PC-3 (cell line): ENCODE measurements at regions of chr10 and their contacts with region 1.

Region 1: DNA sequence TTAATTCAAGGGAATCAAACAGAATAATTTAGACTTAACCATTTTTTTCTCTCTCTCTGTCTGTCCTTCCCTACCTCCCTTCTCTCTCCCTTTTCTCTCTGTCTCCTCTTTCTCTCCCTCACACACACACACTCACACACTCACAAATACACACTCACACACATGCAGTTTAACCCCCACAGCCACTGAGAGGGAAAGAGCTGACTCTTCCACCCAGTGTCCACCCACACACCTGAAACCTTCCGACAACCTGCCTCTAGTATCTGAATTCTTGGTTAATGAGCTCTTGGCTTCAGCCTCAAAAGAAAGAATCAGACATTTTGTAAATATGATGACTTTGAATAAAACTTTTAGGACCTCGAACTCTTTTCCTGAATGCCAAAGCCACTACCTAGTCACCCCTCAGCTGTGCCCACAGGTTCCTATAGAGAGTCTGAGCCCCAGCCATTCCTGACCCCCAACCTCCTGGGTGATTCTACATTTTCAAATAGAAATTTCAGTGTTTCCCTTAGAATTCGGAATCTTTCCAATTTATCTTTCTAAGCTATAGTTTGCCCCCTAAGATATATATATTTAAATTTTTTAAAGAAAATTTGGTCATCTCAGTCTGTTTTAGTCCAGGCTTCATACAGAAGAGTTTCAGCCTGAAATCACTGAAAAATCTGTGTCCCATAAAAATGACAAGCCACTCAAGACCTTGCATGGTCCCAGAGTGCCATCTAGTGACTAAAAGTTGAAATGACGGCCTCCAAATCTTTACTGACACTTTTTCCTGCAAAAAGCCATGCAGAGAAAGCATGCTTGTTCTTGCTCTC is 202.8 kb downstream of the IPMK start:
- DNase-seq: peak; percentile 92
- ATAC-seq: peak; percentile 61
- H3K4me3 ChIP-seq: no peak overlapping the region
- H3K27ac ChIP-seq: no peak overlapping the region
- H3K4me1 ChIP-seq: peaks cover 12% of the 10 kb centered on the region; the same call in 1 of the 2 replicates
- H3K27me3 ChIP-seq: no peaks in the 10 kb centered on the region
- CTCF ChIP-seq: peak; percentile 96

Region 2: GRCh38 chr10:57579926-57580325 is 485.0 kb before region 1 on chr10:
- CTCF ChIA-PET with region 1: no interaction called
- POLR2A ChIA-PET with region 1: no interaction called
- intact Hi-C with region 1: loop called (anchors 1 kb)
- DNase-seq: peak; percentile 78
- ATAC-seq: peak; percentile 98
- H3K4me3 ChIP-seq: no peak overlapping the region
- H3K27ac ChIP-seq: no peak overlapping the region
- H3K4me1 ChIP-seq: no peaks in the 10 kb centered on the region
- H3K27me3 ChIP-seq: no peaks in the 10 kb centered on the region
- CTCF ChIP-seq: peak; percentile 90

Region 3: DNA sequence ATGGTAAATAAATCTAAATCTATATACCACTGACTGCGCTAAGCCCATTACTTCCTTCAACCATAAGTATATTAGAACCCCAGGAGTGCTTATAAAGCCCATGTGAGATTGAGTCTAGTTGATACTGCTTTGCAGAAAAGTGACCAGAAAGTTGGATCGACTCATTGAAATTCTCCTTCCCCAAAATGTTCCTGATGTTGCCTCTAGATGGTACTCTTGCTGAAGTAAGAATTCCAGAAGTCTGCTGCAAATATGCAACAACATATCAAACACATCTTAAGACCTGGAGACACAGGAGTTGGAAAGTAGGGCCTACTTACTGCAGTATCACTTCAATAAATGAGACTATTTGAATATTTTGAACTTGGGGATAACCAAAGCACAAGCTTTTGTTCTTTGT is 348.0 kb before region 1 on chr10:
- CTCF ChIA-PET with region 1: interaction called, 3 read pairs
- POLR2A ChIA-PET with region 1: no interaction called
- intact Hi-C with region 1: loop called (anchors 1 kb)
- DNase-seq: peak; percentile 78
- ATAC-seq: peak; percentile 84
- H3K4me3 ChIP-seq: no peak overlapping the region
- H3K27ac ChIP-seq: no peak overlapping the region
- H3K4me1 ChIP-seq: no peaks in the 10 kb centered on the region
- H3K27me3 ChIP-seq: no peaks in the 10 kb centered on the region
- CTCF ChIP-seq: peak; percentile 86

Region 4: DNA sequence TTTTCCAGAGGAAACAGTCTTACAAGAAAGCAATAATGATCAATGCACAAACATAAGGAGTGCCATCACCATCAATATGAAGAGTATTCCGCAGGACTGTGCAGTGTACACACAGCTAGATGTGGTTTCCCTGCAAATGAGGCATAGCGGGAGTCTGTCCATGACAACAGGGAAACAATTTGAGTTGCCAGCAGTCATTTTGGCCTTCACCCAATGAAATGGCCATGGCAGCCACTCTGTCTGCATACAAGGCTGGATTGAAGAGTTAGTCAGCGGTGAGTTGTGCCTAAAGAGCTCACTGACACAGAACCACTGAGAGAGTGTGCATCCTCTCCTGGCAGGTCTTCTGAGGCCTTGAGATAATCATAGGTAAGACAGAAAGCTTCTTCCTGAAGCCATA is 100.6 kb before region 1 on chr10:
- CTCF ChIA-PET with region 1: no interaction called
- POLR2A ChIA-PET with region 1: no interaction called
- intact Hi-C with region 1: loop called (anchors 5 kb)
- DNase-seq: peak; percentile 94
- ATAC-seq: peak; percentile 96
- H3K4me3 ChIP-seq: no peak overlapping the region
- H3K27ac ChIP-seq: 0 out of 2 replicates have a peak overlapping the region, but pooled peaks have one; percentile 1
- H3K4me1 ChIP-seq: peaks cover 19% of the 10 kb centered on the region
- H3K27me3 ChIP-seq: no peaks in the 10 kb centered on the region
- CTCF ChIP-seq: no peak

Region 5: GRCh38 chr10:57993302-57993701 is 71.6 kb before region 1 on chr10:
- CTCF ChIA-PET with region 1: no interaction called
- POLR2A ChIA-PET with region 1: no interaction called
- intact Hi-C with region 1: no loop called
- DNase-seq: no peak
- ATAC-seq: peak; percentile 10; the same call in 1 of the 2 replicates
- H3K4me3 ChIP-seq: no peak overlapping the region
- H3K27ac ChIP-seq: no peak overlapping the region
- H3K4me1 ChIP-seq: peaks cover 13% of the 10 kb centered on the region
- H3K27me3 ChIP-seq: no peaks in the 10 kb centered on the region
- CTCF ChIP-seq: 0 out of 2 replicates have a peak, but pooled peaks have one; percentile 3

Region 6: DNA sequence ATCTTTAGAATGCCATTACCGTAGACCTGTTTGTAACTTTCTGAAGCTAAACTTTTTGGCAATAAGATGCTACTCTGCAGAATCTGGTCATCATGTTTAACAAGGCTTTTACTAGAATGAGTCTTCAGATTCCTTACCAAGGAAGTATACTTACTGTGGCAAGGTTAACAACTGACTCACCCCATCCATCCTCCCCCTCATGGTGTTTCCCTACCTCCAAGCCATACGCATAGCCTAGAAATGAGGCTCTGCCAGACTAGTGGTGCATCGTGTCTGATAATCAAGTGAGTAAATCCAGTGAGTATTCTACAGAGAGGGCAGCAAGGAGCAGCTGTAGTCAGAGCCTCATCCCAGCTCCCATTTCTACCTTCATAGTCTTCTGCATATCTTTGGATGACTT is 20.8 kb before region 1 on chr10:
- CTCF ChIA-PET with region 1: interaction called, 4 read pairs
- POLR2A ChIA-PET with region 1: interaction called, 3 read pairs
- intact Hi-C with region 1: loop called (anchors 1 kb)
- DNase-seq: peak; percentile 98
- ATAC-seq: peak; percentile 97
- H3K4me3 ChIP-seq: no peak overlapping the region
- H3K27ac ChIP-seq: peak overlapping the region; percentile 43
- H3K4me1 ChIP-seq: peaks cover 32% of the 10 kb centered on the region
- H3K27me3 ChIP-seq: no peaks in the 10 kb centered on the region
- CTCF ChIP-seq: no peak

Region 7: GRCh38 chr10:58475322-58476277 is 410.7 kb after region 1 on chr10:
- CTCF ChIA-PET with region 1: no interaction called
- POLR2A ChIA-PET with region 1: no interaction called
- intact Hi-C with region 1: no loop called
- DNase-seq: peak; percentile 43
- ATAC-seq: peak; percentile 61
- H3K4me3 ChIP-seq: peak overlapping the region; percentile 9
- H3K27ac ChIP-seq: no peak overlapping the region
- H3K4me1 ChIP-seq: peaks cover 12% of the 10 kb centered on the region
- H3K27me3 ChIP-seq: peaks cover 27% of the 10 kb centered on the region
- CTCF ChIP-seq: no peak